ENCODE measurements at regions of chr6 and their contacts with region 1.

Region 1: DNA sequence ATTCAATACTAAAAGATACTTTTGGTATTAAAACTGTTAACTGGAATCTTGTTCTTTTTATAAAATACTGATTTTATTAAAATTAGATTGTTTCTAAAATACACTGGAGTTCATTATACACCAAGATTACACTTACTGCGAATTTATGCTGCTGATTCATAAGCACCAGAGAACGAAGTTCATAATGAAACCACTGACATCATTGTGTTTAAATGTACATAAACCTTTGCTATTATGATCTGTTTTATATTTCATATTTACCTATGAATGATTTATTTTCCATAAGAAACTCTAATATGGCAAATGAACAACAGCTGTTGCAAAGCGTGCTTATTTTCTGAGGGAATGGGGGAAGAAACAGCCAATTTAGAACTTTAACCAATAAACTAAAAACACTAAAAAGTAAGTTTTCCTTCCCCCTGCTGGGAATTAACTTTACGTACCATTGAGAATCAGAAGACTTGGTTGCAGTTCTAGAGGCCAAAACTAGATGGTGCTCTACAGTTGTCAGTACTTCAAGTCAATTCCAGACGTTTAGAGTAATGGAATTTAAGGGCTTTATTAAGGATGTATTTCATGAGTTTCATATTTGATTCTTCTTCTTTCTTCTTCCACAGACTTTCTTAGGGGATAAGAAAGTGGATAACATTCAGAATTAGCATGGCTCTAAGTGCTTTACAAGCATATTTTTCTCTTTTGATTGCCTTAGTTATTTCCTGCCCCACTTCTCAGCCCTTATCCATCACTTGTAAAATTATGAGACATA is 30.8 kb upstream of the COL19A1 start:
- DNase-seq: peak; percentile 37
- H3K4me3 ChIP-seq: no peak overlapping the region
- H3K27ac ChIP-seq: no peak overlapping the region
- H3K4me1 ChIP-seq: no peaks in the 10 kb centered on the region
- H3K27me3 ChIP-seq: peaks cover 11% of the 10 kb centered on the region
- CTCF ChIP-seq: peak; percentile 85 to 88

Region 2: GRCh38 chr6:69985180-69985579 is 149.6 kb after region 1 on chr6:
- CTCF ChIA-PET with region 1: no interaction called
- dilution Hi-C with region 1: no loop called
- in situ Hi-C with region 1: no loop called
- intact Hi-C with region 1: loop called (anchors 2 kb)
- DNase-seq: peak; percentile 7
- H3K4me3 ChIP-seq: no peak overlapping the region
- H3K27ac ChIP-seq: no peak overlapping the region
- H3K4me1 ChIP-seq: no peaks in the 10 kb centered on the region
- H3K27me3 ChIP-seq: no peaks in the 10 kb centered on the region
- CTCF ChIP-seq: peak in 1 of 2 donors; percentile 31

Region 3: GRCh38 chr6:70166088-70166958 is 330.7 kb after region 1 on chr6:
- CTCF ChIA-PET with region 1: no interaction called
- dilution Hi-C with region 1: no loop called
- in situ Hi-C with region 1: no loop called
- intact Hi-C with region 1: loop called (anchors 2 kb)
- DNase-seq: peak; percentile 29
- H3K4me3 ChIP-seq: no peak overlapping the region
- H3K27ac ChIP-seq: no peak overlapping the region
- H3K4me1 ChIP-seq: no peaks in the 10 kb centered on the region
- H3K27me3 ChIP-seq: peaks cover 2% of the 10 kb centered on the region
- CTCF ChIP-seq: peak; percentile 67 to 76

Measured in mammary epithelial cell (primary cell).